Mammary epithelial cell (primary cell): ENCODE measurements at regions of chr2 and their contacts with region 1.

Region 1: DNA sequence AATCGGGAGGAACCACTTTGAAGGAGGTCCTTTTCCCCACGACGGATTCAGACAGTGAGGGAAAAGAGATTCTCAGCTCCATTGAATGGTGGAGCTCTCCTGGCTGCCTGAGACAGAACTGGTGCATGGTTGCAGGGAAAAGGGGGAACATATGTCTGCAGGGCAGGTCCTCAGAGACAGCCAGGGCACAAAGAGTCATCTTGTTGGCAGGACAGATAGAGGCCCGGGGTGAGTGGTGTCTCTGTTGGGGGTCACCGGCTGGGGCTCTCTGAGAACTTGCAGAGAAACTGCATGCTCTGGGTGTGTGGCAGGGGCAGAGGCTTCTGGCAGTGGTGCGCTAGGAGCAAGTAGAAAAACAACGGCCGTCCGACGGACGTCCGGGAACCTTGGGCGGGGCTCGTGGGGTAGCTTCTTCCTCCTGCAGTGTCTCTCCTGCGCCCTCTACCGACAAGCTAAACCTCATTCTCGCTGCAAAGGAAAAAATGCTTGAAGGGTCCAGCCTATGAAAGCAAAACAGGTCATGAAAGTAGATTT is 94.3 kb downstream of the CDCA7 start:
- DNase-seq: peak; percentile 74
- H3K4me3 ChIP-seq: peak overlapping the region in 1 of 3 experiments; percentile 20
- H3K27ac ChIP-seq: no peak overlapping the region
- H3K4me1 ChIP-seq: no peaks in the 10 kb centered on the region
- H3K27me3 ChIP-seq: no peaks in the 10 kb centered on the region
- CTCF ChIP-seq: peak; percentile 81 to 90

Region 2: DNA sequence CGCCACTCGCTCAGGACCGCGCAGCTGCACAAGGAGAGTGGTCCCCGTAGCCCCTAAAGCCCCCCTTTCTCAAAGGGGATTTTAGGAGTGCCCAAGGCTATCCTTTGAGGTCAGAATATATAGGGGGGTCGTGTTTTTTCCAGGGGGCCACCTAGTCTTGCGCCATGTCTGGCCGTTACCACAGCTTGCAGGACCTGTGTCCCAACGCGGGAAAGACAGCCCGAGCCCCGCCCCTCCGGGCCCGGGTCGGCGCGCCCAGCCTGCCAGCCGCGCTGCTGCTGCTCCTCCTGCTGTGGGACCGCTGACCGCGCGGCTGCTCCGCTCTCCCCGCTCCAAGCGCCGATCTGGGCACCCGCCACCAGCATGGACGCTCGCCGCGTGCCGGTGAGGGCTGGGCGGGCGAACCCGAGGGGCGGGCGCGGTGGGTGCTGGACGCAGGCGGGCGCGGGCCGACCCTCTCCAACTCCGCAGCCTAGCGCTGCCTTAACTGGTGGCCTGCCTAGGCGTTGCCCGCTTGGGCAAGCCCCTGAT is 94.3 kb before region 1 on chr2 and contains the start of gene CDCA7:
- CTCF ChIA-PET with region 1: no interaction called
- dilution Hi-C with region 1: no loop called
- in situ Hi-C with region 1: no loop called
- intact Hi-C with region 1: loop called (anchors 2 kb)
- DNase-seq: peak; percentile 62
- H3K4me3 ChIP-seq: peak within 1 kb of the TSS; percentile 65 to 86 (median 84)
- H3K27ac ChIP-seq: peak within 1 kb of the TSS; percentile 81
- H3K4me1 ChIP-seq: peaks cover 17% of the 10 kb centered on the region
- H3K27me3 ChIP-seq: no peaks in the 10 kb centered on the region
- CTCF ChIP-seq: peak in 1 of 2 donors; percentile 22
- total RNA-seq, gene CDCA7: 2.5 to 20.0 TPM

Region 3: GRCh38 chr2:173667417-173667816 is 218.4 kb after region 1 on chr2:
- CTCF ChIA-PET with region 1: interaction called, 11 read pairs
- dilution Hi-C with region 1: no loop called
- in situ Hi-C with region 1: no loop called
- intact Hi-C with region 1: loop called (anchors 2 kb)
- DNase-seq: peak; percentile 60
- H3K4me3 ChIP-seq: no peak overlapping the region
- H3K27ac ChIP-seq: peak overlapping the region; percentile 58
- H3K4me1 ChIP-seq: peaks cover 20% of the 10 kb centered on the region
- H3K27me3 ChIP-seq: no peaks in the 10 kb centered on the region
- CTCF ChIP-seq: peak; percentile 55 to 70

Region 4: DNA sequence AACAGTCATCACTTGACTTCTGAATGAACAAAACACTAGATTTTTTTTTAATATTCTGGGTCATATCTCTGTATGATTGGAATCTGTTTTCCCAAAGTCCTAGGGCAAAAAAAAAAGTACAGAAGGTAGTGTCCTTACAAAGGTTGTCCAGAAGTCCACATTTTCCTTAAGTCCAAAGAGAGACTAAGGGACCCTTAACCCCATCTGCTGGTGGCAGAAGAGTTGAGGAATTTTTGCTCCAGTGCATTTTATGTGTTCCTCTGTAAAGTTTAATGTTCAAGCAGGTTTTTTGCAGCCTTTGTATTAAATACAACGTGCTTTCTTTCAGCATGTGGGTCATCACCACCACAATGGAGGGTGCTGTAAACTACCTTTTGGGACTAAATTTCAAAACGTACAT is 300.3 kb after region 1 on chr2:
- CTCF ChIA-PET with region 1: no interaction called
- dilution Hi-C with region 1: no loop called
- in situ Hi-C with region 1: no loop called
- intact Hi-C with region 1: loop called (anchors 1 kb)
- DNase-seq: peak; percentile 6
- H3K4me3 ChIP-seq: no peak overlapping the region
- H3K27ac ChIP-seq: no peak overlapping the region
- H3K4me1 ChIP-seq: no peaks in the 10 kb centered on the region
- H3K27me3 ChIP-seq: no peaks in the 10 kb centered on the region
- CTCF ChIP-seq: peak in 1 of 2 donors; percentile 52

Region 5: GRCh38 chr2:174282441-174282840 is 833.4 kb after region 1 on chr2:
- CTCF ChIA-PET with region 1: no interaction called
- dilution Hi-C with region 1: loop called (anchors 10 kb)
- in situ Hi-C with region 1: no loop called
- intact Hi-C with region 1: no loop called
- DNase-seq: no peak
- H3K4me3 ChIP-seq: no peak overlapping the region
- H3K27ac ChIP-seq: no peak overlapping the region
- H3K4me1 ChIP-seq: no peaks in the 10 kb centered on the region
- H3K27me3 ChIP-seq: no peaks in the 10 kb centered on the region
- CTCF ChIP-seq: no peak